ENCODE measurements at regions of chr14 and their contacts with region 1.

Region 1: DNA sequence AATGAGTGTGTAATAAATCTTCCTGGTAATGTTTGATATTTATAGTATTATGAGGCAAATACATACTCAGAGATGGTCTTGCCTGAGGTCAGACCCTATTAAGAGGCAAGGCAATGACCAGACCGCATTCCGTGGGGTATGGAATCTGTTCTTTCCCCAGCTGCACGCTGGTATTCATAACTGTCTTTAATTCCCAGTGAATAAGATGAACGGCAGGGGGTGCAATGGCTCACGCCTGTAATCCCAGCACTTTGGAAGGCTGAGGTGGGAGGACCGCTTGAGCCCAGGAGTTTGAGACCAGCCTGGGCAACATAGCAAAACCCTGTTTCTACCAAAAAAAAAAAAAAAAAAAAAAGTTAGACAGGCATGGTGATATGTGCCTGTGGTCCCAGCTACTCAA is 44.6 kb downstream of the ERO1A start:
- DNase-seq: no peak
- H3K4me3 Mint-ChIP-seq: no peak overlapping the region
- H3K27ac Mint-ChIP-seq: no peak overlapping the region
- H3K4me1 Mint-ChIP-seq: no peaks in the 10 kb centered on the region
- H3K27me3 Mint-ChIP-seq: no peaks in the 10 kb centered on the region

Region 2: GRCh38 chr14:52686176-52686575 is 35.4 kb after region 1 on chr14:
- CTCF ChIA-PET with region 1: no interaction called
- POLR2A ChIA-PET with region 1: no interaction called
- intact Hi-C with region 1: loop called (anchors 5 kb)
- DNase-seq: no peak
- H3K4me3 Mint-ChIP-seq: no peak overlapping the region
- H3K27ac Mint-ChIP-seq: no peak overlapping the region
- H3K4me1 Mint-ChIP-seq: peaks cover 65% of the 10 kb centered on the region
- H3K27me3 Mint-ChIP-seq: no peaks in the 10 kb centered on the region